HepG2 (cell line): ENCODE measurements at regions of chr1 and their contacts with region 1.

Region 1: GRCh38 chr1:115595279-115596079 is 46.3 kb upstream of the VANGL1 start:
- DNase-seq: peak; percentile 44
- ATAC-seq: peak; percentile 97
- H3K4me3 ChIP-seq: no peak overlapping the region
- H3K27ac ChIP-seq: no peak overlapping the region
- H3K4me1 ChIP-seq: no peaks in the 10 kb centered on the region
- H3K27me3 ChIP-seq: no peaks in the 10 kb centered on the region
- CTCF ChIP-seq: peak; percentile 86
- EP300 ChIP-seq: no peak
- POLR2A ChIP-seq: no peak
- RAD21 ChIP-seq: peak; percentile 67

Region 2: DNA sequence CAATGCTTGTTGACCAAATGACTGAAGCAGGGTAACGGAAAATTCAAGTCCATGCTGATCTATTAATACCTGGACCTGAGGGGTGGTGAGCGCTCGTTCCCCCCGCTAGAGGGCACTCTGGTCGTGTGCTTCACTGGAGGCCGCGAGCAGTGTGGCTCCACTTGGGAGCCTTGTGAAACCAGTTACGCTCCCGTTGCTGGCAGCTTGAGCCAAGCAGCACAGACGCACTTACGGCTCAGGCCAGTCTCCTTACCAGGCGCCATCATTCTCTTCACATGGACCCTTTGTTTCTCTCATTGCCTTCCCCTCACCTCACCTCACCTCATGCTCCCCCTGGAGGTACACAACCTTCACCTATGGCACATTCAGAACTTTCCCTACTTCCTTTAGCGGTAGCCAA is 456.5 kb before region 1 on chr1:
- CTCF ChIA-PET with region 1: interaction called, 23 read pairs
- POLR2A ChIA-PET with region 1: no interaction called
- in situ Hi-C with region 1: loop called (anchors 5 kb)
- intact Hi-C with region 1: loop called (anchors 1 kb)
- DNase-seq: peak; percentile 63
- ATAC-seq: peak; percentile 100
- H3K4me3 ChIP-seq: no peak overlapping the region
- H3K27ac ChIP-seq: no peak overlapping the region
- H3K4me1 ChIP-seq: no peaks in the 10 kb centered on the region
- H3K27me3 ChIP-seq: no peaks in the 10 kb centered on the region
- CTCF ChIP-seq: peak; percentile 95
- EP300 ChIP-seq: no peak
- POLR2A ChIP-seq: no peak
- RAD21 ChIP-seq: peak; percentile 88

Region 3: DNA sequence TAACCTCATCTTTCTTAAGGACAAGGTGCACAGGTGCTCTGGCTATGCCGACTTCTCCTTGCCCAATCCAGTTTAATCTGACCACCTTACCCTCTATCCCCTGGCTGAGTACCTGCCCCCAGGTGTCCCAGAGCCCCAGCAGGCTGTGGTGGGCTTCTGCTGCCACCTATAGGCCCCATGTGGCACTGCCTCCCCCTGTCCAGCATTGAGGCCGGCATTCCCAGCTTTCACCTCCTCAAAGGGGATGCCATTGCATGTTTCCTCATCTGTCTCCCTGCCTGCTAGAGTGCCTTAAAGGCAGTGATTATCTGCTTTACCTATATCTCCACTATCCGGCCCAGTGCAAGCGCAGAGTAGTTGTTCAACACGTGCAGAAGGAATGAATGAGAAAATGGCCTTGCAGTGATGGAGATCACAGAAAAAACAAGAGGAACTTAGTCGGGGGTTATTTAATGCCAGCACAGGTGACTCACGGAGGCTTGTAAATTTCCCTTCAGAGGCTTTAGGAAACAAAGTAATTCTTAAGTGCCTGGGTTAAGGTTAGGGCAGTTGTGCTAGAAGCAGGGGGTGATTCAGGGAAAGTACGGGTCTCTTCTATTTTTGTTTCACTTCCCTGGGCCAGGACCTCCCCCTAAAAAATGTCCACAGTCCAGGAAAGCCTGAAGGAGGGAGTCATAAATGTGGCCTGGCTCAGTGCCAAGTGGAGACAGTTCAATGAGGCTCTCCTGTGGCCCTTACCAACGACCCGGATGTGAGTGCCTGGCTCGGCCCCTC is 125.6 kb before region 1 on chr1:
- CTCF ChIA-PET with region 1: no interaction called
- POLR2A ChIA-PET with region 1: no interaction called
- in situ Hi-C with region 1: no loop called
- intact Hi-C with region 1: loop called (anchors 2 kb)
- DNase-seq: peak; percentile 8
- ATAC-seq: peak; percentile 92
- H3K4me3 ChIP-seq: no peak overlapping the region
- H3K27ac ChIP-seq: no peak overlapping the region
- H3K4me1 ChIP-seq: no peaks in the 10 kb centered on the region
- H3K27me3 ChIP-seq: no peaks in the 10 kb centered on the region
- CTCF ChIP-seq: peak; percentile 91
- EP300 ChIP-seq: no peak
- POLR2A ChIP-seq: no peak
- RAD21 ChIP-seq: peak; percentile 68

Region 4: GRCh38 chr1:115545791-115546733 is 49.4 kb before region 1 on chr1:
- CTCF ChIA-PET with region 1: interaction called, 8 read pairs
- POLR2A ChIA-PET with region 1: no interaction called
- in situ Hi-C with region 1: loop called (anchors 10 kb)
- intact Hi-C with region 1: loop called (anchors 2 kb)
- DNase-seq: peak; percentile 60
- ATAC-seq: peak; percentile 98
- H3K4me3 ChIP-seq: no peak overlapping the region
- H3K27ac ChIP-seq: no peak overlapping the region
- H3K4me1 ChIP-seq: peaks cover 13% of the 10 kb centered on the region
- H3K27me3 ChIP-seq: no peaks in the 10 kb centered on the region
- CTCF ChIP-seq: peak; percentile 87
- EP300 ChIP-seq: no peak
- POLR2A ChIP-seq: no peak
- RAD21 ChIP-seq: no peak; the same call in 1 of the 2 replicates